Activated CD8-positive, alpha-beta T cell treated with anti-CD3 and anti-CD28 coated beads for 36 hours (primary cell): ENCODE measurements at regions of chr9 and their contacts with region 1.

Region 1: DNA sequence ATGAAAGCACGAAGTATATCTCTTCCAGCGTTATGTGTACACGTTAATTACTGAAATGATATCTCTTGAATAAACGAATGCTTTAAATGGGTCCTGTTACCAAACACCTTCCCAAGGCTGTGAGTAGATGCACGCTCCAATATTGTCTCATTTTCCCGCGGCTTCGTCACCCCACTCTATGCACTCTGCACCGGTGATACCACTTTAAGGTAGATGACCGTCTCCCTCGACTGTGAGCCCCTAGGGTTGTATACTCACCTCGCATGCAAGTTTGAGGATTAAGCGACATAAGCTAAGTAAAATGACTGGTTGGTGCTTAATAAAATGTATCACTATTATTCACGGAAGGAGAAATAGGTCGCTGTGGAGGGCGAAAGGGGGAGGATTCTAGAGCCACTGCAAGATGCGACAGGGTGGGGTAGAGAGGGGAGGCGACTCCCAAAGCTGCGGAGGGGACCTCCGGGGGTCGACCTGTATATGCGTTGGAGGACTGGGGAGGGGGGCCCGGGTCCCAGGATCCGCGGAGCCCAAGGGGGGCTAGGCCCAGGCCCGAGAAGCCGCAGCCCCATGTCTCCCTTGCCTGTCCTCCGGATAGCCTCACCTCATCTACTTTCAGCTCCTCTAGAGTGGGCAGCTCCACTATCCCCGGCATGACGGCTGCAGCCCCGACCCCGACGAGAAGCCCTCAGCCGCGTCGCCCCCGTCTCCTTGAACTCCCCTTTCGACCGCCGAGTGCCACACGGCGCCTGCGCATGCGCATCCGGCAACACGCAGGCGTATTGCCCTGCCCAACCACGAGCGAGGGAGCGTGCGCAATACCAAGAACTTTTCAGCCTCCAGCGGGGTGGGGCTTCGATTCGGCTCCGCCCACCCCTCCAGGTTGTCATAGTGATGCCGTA is at the starts of genes MORN5 and NDUFA8:
- DNase-seq: peak; percentile 97
- ATAC-seq: peak; percentile 97
- H3K4me3 Mint-ChIP-seq: peak within 1 kb of the TSS; percentile 97
- H3K27ac Mint-ChIP-seq: peak within 1 kb of the TSS; percentile 96
- H3K4me1 Mint-ChIP-seq: peaks cover 30% of the 10 kb centered on the region
- H3K27me3 Mint-ChIP-seq: peaks cover 2% of the 10 kb centered on the region
- CTCF ChIP-seq: no peak
- total RNA-seq, gene MORN5: not detected
- total RNA-seq, gene NDUFA8: 48.3 to 52.5 TPM

Region 2: GRCh38 chr9:122264360-122265148 is 105.3 kb after region 1 on chr9 and contains the starts of genes MRRF and RBM18:
- CTCF ChIA-PET with region 1: interaction called, 6 read pairs
- POLR2A ChIA-PET with region 1: interaction called, 10 read pairs
- intact Hi-C with region 1: no loop called
- DNase-seq: peak; percentile 92
- ATAC-seq: peak; percentile 81
- H3K4me3 Mint-ChIP-seq: peak within 1 kb of the TSS; percentile 84
- H3K27ac Mint-ChIP-seq: peak within 1 kb of the TSS; percentile 100
- H3K4me1 Mint-ChIP-seq: peaks cover 41% of the 10 kb centered on the region
- H3K27me3 Mint-ChIP-seq: no peaks in the 10 kb centered on the region
- CTCF ChIP-seq: no peak
- total RNA-seq, gene MRRF: 69.8 to 76.0 TPM
- total RNA-seq, gene RBM18: 24.3 to 28.6 TPM